ENCODE measurements at regions of chr9 and their contacts with region 1.

Region 1: GRCh38 chr9:99680191-99680590 is 141.5 kb upstream of the NR4A3 start:
- DNase-seq: no peak
- ATAC-seq: no peak
- H3K4me3 ChIP-seq: no peak overlapping the region
- H3K4me3 Mint-ChIP-seq: no peak overlapping the region
- H3K27ac ChIP-seq: no peak overlapping the region
- H3K27ac Mint-ChIP-seq: no peak overlapping the region
- H3K4me1 ChIP-seq: no peaks in the 10 kb centered on the region
- H3K4me1 Mint-ChIP-seq: peaks cover 9% of the 10 kb centered on the region
- H3K27me3 ChIP-seq: no peaks in the 10 kb centered on the region
- H3K27me3 Mint-ChIP-seq: no peaks in the 10 kb centered on the region
- CTCF ChIP-seq: no peak

Region 2: DNA sequence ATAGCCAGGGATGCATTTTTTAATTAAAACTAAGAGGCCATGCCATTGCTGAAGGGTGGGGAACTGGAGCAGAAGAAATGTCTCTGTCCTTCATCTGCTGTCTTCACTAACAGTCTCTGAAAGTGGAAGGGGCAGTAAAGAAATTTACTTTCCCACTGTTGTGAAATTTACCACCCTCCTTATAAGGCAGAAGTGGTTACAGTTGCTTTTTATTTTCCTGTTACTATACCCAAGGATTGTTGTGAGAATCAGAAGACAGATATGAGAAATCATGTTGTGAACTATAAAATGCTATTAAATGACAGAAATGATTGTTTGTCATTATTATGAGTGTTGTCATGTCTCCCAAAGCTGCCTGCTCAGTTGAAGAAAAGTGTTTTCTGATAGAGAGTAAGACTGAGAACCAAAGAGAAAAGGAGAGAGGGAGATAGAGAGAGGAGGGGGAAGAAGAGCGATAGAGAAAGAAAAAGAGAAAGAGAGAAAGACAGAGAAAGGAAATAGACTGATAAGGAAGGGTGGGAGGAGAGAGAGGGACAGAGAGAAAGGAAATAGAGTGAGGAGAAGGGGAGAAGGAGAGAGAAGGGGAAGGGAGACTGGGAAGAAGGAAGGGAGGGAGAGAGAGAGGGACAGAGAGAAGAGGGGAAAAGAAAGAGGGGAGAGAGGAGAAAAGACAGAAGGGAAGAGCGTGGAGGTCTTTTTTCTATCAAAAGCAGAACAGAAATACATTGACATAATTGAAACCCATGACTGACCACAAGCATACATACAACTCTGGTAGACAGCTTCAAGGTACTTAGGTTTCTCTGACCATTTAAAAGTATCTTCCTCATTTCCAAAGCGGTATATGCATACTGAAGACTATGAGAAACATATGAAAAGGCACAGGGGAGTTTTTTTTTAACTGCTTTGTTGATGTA is 435.6 kb before region 1 on chr9:
- CTCF ChIA-PET with region 1: no interaction called
- POLR2A ChIA-PET with region 1: no interaction called
- intact Hi-C with region 1: no loop called
- DNase-seq: peak; percentile 55
- ATAC-seq: peak; percentile 87
- H3K4me3 ChIP-seq: no peak overlapping the region
- H3K4me3 Mint-ChIP-seq: peak overlapping the region; percentile 42
- H3K27ac ChIP-seq: peak overlapping the region in 1 of 2 donors; percentile 46
- H3K27ac Mint-ChIP-seq: peak overlapping the region; percentile 46
- H3K4me1 ChIP-seq: peaks cover 4 to 12% of the 10 kb centered on the region in 2 donors
- H3K4me1 Mint-ChIP-seq: peaks cover 16% of the 10 kb centered on the region
- H3K27me3 ChIP-seq: no peaks in the 10 kb centered on the region
- H3K27me3 Mint-ChIP-seq: no peaks in the 10 kb centered on the region
- CTCF ChIP-seq: peak; percentile 28

Region 3: DNA sequence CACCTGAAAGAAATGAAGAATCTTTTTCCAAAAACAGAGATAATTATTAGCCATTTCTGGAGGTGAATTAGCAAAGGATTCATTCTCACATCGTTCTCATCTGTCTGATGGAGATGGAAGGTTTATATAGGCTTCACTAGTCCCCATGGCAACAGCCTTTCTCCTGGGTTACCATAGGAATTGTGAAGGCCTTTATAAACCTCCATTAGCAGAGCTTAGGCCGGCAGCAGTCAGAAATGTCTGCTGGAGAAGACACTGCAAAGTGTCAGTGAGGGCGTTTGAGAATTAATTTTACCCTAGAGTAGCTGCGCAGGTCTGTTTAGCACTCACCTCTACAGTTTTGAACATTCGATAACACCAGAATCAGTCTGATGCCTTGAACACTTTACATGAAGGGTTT is 148.9 kb before region 1 on chr9:
- CTCF ChIA-PET with region 1: no interaction called
- POLR2A ChIA-PET with region 1: no interaction called
- intact Hi-C with region 1: no loop called
- DNase-seq: no peak
- ATAC-seq: no peak
- H3K4me3 ChIP-seq: no peak overlapping the region
- H3K4me3 Mint-ChIP-seq: no peak overlapping the region
- H3K27ac ChIP-seq: no peak overlapping the region
- H3K27ac Mint-ChIP-seq: no peak overlapping the region
- H3K4me1 ChIP-seq: no peaks in the 10 kb centered on the region
- H3K4me1 Mint-ChIP-seq: no peaks in the 10 kb centered on the region
- H3K27me3 ChIP-seq: no peaks in the 10 kb centered on the region
- H3K27me3 Mint-ChIP-seq: peaks cover 5% of the 10 kb centered on the region
- CTCF ChIP-seq: no peak

Region 4: DNA sequence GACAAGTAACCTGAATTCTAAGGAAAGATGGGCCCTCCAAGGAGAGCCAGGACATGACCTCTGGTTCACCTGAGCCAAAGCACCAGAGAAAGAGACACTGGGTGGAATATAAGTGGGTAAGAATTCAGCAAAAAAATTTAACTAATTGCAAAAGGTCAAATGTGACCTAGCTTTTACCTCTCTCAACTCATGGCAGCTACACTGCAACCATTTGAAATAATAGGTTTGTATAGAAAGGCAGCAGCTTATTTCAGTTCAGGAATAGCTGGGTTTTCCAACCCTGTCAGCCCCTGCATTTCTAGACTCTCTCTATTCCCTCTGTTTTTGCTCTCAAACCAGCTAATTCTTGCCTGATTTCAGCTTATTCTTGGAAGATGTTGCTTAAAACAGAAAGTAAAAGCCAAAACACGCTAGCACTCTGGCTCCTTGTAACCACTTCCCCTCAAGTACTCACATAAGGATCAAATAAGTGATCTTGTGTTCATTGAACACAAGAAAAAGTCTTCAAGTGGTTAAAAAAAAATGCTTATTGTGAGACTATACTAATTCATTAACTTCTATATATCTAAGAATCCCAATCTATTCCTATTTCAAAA is 40.4 kb after region 1 on chr9:
- CTCF ChIA-PET with region 1: no interaction called
- POLR2A ChIA-PET with region 1: no interaction called
- intact Hi-C with region 1: loop called (anchors 5 kb)
- DNase-seq: peak; percentile 60
- ATAC-seq: no peak
- H3K4me3 ChIP-seq: peak overlapping the region; percentile 16 to 60 (median 47)
- H3K4me3 Mint-ChIP-seq: peak overlapping the region; percentile 88
- H3K27ac ChIP-seq: peak overlapping the region; percentile 50 to 69
- H3K27ac Mint-ChIP-seq: peak overlapping the region; percentile 81
- H3K4me1 ChIP-seq: peaks cover 12 to 16% of the 10 kb centered on the region in 2 donors
- H3K4me1 Mint-ChIP-seq: peaks cover 30% of the 10 kb centered on the region
- H3K27me3 ChIP-seq: no peaks in the 10 kb centered on the region
- H3K27me3 Mint-ChIP-seq: no peaks in the 10 kb centered on the region
- CTCF ChIP-seq: no peak

Region 5: DNA sequence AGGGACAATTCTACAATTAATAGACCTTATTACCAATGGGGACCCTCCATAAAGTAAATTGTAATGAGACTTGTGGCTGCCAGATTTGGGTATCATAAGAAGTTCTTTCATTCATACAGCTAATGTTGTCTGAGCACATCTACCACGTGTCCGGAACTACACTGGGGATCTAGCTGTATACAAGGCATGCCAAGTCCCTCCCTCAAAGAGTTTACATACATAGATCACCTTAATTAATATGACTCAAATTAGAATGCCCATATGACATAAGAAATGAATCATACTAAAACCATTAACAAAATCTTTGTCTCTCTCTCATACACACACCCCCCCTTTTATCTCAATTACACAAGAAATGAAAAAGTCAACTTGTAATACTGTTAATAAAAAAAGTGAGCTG is 123.5 kb after region 1 on chr9:
- CTCF ChIA-PET with region 1: no interaction called
- POLR2A ChIA-PET with region 1: no interaction called
- intact Hi-C with region 1: no loop called
- DNase-seq: no peak
- ATAC-seq: no peak
- H3K4me3 ChIP-seq: no peak overlapping the region
- H3K4me3 Mint-ChIP-seq: no peak overlapping the region
- H3K27ac ChIP-seq: no peak overlapping the region
- H3K27ac Mint-ChIP-seq: no peak overlapping the region
- H3K4me1 ChIP-seq: no peaks in the 10 kb centered on the region
- H3K4me1 Mint-ChIP-seq: peaks cover 16% of the 10 kb centered on the region
- H3K27me3 ChIP-seq: no peaks in the 10 kb centered on the region
- H3K27me3 Mint-ChIP-seq: no peaks in the 10 kb centered on the region
- CTCF ChIP-seq: no peak

Measured in B cell (primary cell).